ENCODE measurements at regions of chr4 and their contacts with region 1.

Region 1: GRCh38 chr4:1216869-1217294 is 32.0 kb downstream of the CTBP1 start:
- DNase-seq: peak; percentile 40 to 79 (median 65)
- H3K4me3 ChIP-seq: peak overlapping the region; percentile 38
- H3K4me3 Mint-ChIP-seq: peak overlapping the region; percentile 59 to 83 (median 70)
- H3K27ac ChIP-seq: no peak overlapping the region
- H3K27ac Mint-ChIP-seq: peak overlapping the region in 7 of 8 donors; percentile 50 to 89 (median 78)
- H3K4me1 ChIP-seq: peaks cover 19% of the 10 kb centered on the region
- H3K4me1 Mint-ChIP-seq: peaks cover 41 to 61% (median 42%) of the 10 kb centered on the region in 3 donors
- H3K27me3 ChIP-seq: no peaks in the 10 kb centered on the region
- H3K27me3 Mint-ChIP-seq: peaks cover 0 to 1% of the 10 kb centered on the region in 2 donors

Region 2: DNA sequence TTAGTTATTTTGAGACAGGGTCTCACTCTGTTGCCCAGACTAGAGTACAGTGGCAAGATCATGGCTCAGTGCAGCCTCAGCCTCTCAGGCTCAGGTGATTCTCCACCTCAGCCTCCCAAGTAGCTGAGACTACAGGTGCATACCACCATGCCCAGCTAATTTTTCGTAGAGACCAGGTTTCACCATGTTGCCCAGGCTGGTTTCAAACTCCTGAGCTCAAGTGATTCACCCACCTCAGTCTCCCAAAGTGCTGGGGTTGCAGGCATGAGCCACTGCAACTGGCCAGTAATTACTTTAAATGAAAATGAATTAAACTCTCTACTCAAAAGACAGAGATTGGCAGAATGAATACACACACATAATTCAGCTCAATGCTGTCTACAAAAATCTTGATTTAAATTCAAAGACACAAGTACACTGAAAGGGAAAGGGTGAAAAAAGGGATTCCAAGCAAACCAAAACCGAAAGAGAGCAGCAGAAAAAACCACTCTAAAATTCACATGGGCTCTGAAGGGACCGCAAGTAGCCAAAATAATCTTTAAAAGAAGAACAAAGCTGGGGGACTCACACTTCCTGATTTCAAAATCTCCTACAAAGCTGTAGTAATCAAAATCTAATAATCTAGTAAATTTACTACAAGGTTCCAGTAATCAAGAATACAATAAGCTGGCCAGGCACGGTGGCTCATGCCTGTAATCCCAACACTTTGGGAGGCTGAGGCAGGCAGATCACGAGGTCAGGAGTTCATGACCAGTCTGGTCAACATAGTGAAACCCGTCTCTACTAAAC is 32.7 kb before region 1 on chr4:
- CTCF ChIA-PET with region 1: no interaction called
- POLR2A ChIA-PET with region 1: no interaction called
- DNase-seq: no peak
- H3K4me3 ChIP-seq: no peak overlapping the region
- H3K4me3 Mint-ChIP-seq: peak overlapping the region; percentile 62 to 85 (median 80)
- H3K27ac ChIP-seq: no peak overlapping the region
- H3K27ac Mint-ChIP-seq: peak overlapping the region; percentile 76 to 91 (median 82)
- H3K4me1 ChIP-seq: peaks cover 27% of the 10 kb centered on the region
- H3K4me1 Mint-ChIP-seq: peaks cover 50 to 74% (median 66%) of the 10 kb centered on the region in 3 donors
- H3K27me3 ChIP-seq: no peaks in the 10 kb centered on the region
- H3K27me3 Mint-ChIP-seq: peaks cover 0 to 4% of the 10 kb centered on the region in 2 donors

Region 3: DNA sequence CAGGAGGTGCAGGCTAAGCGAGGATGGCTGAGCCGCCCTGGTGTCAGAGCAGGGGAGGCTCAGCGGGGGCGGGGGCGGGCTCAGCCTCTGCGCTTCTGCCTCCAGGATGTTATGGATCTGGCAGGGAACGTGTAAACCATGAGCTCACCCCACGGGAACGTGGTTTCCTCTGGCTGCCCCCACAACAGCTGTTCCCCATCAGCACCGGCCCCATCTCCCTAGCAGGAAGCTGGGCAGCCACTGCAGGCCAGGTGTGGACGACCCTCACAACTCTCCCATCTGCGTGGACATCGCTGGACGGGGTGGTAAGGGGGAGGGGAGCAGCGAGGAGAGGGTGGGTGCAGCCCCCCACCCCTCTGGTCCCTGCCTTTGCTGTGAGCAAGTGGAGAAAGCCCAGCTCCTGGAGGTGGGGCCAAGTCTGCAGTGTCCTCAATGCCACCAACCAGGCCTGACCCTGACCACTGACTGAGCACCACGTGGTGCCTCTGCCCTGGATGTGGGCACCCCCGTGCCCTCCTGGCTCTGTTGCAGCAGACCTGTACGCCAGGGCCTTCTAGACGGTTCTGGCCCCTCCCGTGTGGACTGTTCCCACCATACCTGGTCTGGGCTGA is 16.4 kb before region 1 on chr4:
- CTCF ChIA-PET with region 1: interaction called, 13 read pairs
- POLR2A ChIA-PET with region 1: interaction called, 5 read pairs
- DNase-seq: peak in 4 of 5 donors; percentile 18 to 54 (median 32)
- H3K4me3 ChIP-seq: peak overlapping the region; percentile 59
- H3K4me3 Mint-ChIP-seq: peak overlapping the region; percentile 64 to 98 (median 89)
- H3K27ac ChIP-seq: peak overlapping the region; percentile 81
- H3K27ac Mint-ChIP-seq: peak overlapping the region; percentile 92 to 100 (median 97)
- H3K4me1 ChIP-seq: peaks cover 55% of the 10 kb centered on the region
- H3K4me1 Mint-ChIP-seq: peaks cover 58 to 86% (median 66%) of the 10 kb centered on the region in 3 donors
- H3K27me3 ChIP-seq: no peaks in the 10 kb centered on the region
- H3K27me3 Mint-ChIP-seq: no peaks in the 10 kb centered on the region

Region 4: GRCh38 chr4:1266881-1267763 is 50.2 kb after region 1 on chr4:
- CTCF ChIA-PET with region 1: no interaction called
- POLR2A ChIA-PET with region 1: no interaction called
- DNase-seq: peak in 2 of 5 donors; percentile 17 to 64
- H3K4me3 ChIP-seq: peak overlapping the region; percentile 58
- H3K4me3 Mint-ChIP-seq: peak overlapping the region; percentile 77 to 95 (median 83)
- H3K27ac ChIP-seq: peak overlapping the region; percentile 59
- H3K27ac Mint-ChIP-seq: peak overlapping the region; percentile 92 to 98 (median 95)
- H3K4me1 ChIP-seq: peaks cover 8% of the 10 kb centered on the region
- H3K4me1 Mint-ChIP-seq: peaks cover 10 to 15% (median 11%) of the 10 kb centered on the region in 3 donors
- H3K27me3 ChIP-seq: no peaks in the 10 kb centered on the region
- H3K27me3 Mint-ChIP-seq: peaks cover 0 to 2% of the 10 kb centered on the region in 2 donors

Region 5: DNA sequence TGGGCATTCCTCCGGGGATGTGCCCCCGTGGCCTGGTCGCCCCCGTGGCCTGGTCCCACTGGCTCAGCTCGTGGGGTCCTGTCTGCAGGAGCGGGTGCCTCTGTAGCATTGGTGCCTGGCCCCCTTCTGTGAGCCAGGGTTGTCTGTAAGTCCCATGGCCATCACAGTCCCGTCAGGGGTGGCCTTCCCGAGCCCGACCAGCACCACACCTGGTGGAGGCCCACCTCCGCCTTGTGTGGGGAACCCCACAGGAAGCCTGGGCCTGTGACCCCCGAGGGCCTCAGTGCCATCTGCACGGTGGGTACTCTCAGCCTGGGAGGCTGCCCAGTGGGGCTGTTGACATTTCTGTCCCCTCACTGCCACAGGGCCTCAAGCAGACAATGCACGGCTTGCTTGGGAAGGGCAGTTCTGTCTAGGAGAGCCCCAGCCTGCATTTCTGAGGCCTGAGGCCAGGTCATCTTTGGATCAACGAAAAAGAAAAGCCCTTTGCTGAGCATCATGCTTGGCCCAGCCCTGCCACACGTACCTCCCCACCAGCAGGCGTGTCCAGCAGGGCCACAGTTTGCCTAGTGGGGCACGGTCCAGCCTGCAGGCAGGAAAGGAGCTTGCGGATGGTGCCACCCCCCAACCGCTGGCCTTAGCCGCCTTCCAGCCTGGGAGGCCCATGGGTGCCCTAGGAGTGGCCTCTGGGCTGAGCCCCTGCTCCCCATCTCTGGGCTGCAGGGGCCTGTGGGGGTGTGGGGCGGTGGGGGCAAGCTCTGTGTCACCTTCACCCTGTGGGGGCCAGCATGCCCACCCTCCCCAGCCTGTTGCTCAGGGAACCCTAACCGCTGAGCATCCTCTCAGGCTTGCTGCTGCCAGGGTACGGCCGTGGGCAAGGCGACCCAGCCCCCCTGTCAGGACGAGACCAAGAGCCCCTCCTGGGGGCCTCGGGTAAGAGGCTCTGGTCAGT is 166.2 kb after region 1 on chr4:
- CTCF ChIA-PET with region 1: no interaction called
- POLR2A ChIA-PET with region 1: no interaction called
- DNase-seq: peak in 1 of 5 donors; percentile 38
- H3K4me3 ChIP-seq: no peak overlapping the region
- H3K4me3 Mint-ChIP-seq: no peak overlapping the region
- H3K27ac ChIP-seq: no peak overlapping the region
- H3K27ac Mint-ChIP-seq: no peak overlapping the region
- H3K4me1 ChIP-seq: no peaks in the 10 kb centered on the region
- H3K4me1 Mint-ChIP-seq: no peaks in the 10 kb centered on the region
- H3K27me3 ChIP-seq: no peaks in the 10 kb centered on the region
- H3K27me3 Mint-ChIP-seq: peaks cover 0 to 1% of the 10 kb centered on the region in 2 donors